ENCODE measurements at regions of chr9 and their contacts with region 1.

Region 1: GRCh38 chr9:21789541-21790037 is 12.8 kb upstream of the MTAP start:
- DNase-seq: no peak
- H3K4me3 ChIP-seq: peak overlapping the region; percentile 48
- CTCF ChIP-seq: peak; percentile 61

Region 2: DNA sequence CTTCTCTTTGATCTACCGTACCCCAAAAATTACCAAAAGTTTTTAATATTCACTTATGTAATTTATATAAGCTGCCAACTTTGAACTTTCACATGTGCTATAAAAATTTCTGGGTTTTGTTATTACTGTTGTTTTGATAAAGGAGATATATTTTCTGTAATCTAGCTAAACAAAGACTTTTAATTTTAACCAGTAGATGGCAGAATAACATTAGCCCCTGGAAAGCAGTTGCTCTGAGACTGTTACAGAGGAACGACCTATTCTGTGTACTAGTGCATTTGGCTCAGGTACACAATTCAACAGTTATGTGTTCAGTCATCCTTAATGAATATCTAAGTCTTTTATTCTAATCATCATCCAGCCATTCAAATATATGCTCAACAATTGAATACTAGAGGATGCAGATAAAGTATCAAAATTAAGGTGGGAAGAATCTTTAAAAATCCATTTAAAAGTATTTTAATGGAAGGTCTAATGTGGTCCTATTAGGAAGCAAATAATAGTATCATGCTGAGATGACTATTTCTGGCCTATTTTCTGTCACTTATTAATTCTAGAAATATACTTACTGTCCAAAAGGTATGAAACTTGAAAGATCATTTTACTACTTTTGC is 463.0 kb before region 1 on chr9:
- CTCF ChIA-PET with region 1: interaction called, 13 read pairs
- POLR2A ChIA-PET with region 1: no interaction called
- DNase-seq: no peak
- H3K4me3 ChIP-seq: no peak overlapping the region
- CTCF ChIP-seq: peak; percentile 34

Region 3: DNA sequence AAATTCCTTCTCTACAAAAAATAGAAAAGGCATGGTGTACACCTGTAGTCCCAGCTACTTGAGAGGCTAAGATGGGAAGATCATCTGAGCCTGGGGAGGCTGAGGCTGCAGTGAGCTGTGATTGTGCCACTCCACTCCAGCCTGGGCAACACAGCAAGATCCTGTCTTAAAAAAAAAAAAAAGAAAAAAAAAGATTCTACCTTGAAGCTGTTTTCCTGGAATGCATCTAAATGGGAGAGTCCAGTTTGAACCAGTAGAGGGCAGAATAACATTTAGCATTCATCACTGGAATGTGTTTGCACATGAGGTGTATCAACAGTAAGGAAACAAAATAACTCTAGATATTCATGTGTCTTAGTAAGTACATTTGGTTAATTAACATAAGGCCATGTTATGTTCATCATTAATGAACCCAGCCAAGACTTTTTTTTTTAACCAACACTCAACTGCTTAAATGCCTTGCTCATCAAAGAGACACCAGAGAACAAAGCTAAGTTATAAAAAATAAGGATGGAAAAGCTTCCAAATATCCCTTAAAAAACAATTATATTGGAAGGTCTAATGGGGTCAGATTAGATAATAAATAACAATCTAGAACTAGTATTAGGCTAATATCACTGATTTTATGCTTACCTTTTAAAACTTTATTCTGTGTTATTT is 323.6 kb before region 1 on chr9:
- CTCF ChIA-PET with region 1: interaction called, 77 read pairs
- POLR2A ChIA-PET with region 1: no interaction called
- DNase-seq: no peak
- H3K4me3 ChIP-seq: no peak overlapping the region
- CTCF ChIP-seq: peak; percentile 51

Region 4: GRCh38 chr9:21559424-21560280 is 229.9 kb before region 1 on chr9:
- CTCF ChIA-PET with region 1: interaction called, 12 read pairs
- POLR2A ChIA-PET with region 1: no interaction called
- DNase-seq: no peak
- H3K4me3 ChIP-seq: peak overlapping the region; percentile 76
- CTCF ChIP-seq: no peak

Region 5: DNA sequence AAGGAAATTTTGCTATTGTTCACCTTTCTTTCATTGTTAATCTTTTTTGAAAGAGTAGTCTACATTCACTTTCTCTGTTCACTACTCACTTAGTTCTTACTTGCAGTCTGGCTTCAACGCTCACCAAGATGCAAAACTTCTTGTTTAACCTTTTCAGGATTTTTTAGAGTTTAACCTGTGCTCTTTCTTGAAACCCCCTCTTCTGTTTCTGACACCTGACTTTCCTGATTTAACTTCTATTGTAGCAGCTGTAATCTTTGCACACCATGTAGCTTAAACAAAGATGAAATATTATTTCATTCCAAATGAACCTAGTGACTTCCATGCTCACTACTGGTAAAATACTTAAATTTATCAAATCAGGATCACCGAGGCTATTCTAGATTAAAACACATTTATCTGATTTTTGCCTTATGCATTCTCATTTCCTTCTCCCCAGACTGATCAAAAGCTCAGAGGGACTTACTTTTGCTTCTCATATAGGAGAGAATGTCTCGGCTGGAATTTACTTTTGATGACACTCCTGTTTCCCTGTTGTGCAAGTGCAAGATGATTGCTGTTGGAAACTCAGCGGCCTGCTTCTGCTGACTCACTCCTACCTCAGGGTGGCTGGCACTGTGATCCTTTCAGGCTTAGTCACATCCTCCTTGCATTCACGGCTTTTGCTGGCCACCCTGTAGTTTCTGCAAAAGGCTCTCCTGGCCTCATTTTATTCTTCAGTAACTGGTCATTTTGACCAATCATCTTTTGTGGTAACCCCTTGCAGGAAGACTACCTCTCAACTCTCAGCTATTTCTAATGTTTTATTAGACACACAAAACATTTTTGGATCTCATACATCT is 198.1 kb before region 1 on chr9:
- CTCF ChIA-PET with region 1: interaction called, 11 read pairs
- POLR2A ChIA-PET with region 1: no interaction called
- DNase-seq: peak; percentile 97
- H3K4me3 ChIP-seq: peak overlapping the region; percentile 7
- CTCF ChIP-seq: no peak

Region 6: GRCh38 chr9:21770877-21771560 is 18.6 kb before region 1 on chr9:
- CTCF ChIA-PET with region 1: interaction called, 12 read pairs
- POLR2A ChIA-PET with region 1: no interaction called
- DNase-seq: peak; percentile 57
- H3K4me3 ChIP-seq: no peak overlapping the region
- CTCF ChIP-seq: no peak

Measured in AG04449 (cell line).